BJ (cell line): ENCODE measurements at regions of chr22 and their contacts with region 1.

Region 1: GRCh38 chr22:28899199-28899853 is 16.0 kb downstream of the ZNRF3 start:
- DNase-seq: no peak
- H3K4me3 ChIP-seq: no peak overlapping the region
- H3K27me3 ChIP-seq: no peaks in the 10 kb centered on the region
- CTCF ChIP-seq: no peak

Region 2: DNA sequence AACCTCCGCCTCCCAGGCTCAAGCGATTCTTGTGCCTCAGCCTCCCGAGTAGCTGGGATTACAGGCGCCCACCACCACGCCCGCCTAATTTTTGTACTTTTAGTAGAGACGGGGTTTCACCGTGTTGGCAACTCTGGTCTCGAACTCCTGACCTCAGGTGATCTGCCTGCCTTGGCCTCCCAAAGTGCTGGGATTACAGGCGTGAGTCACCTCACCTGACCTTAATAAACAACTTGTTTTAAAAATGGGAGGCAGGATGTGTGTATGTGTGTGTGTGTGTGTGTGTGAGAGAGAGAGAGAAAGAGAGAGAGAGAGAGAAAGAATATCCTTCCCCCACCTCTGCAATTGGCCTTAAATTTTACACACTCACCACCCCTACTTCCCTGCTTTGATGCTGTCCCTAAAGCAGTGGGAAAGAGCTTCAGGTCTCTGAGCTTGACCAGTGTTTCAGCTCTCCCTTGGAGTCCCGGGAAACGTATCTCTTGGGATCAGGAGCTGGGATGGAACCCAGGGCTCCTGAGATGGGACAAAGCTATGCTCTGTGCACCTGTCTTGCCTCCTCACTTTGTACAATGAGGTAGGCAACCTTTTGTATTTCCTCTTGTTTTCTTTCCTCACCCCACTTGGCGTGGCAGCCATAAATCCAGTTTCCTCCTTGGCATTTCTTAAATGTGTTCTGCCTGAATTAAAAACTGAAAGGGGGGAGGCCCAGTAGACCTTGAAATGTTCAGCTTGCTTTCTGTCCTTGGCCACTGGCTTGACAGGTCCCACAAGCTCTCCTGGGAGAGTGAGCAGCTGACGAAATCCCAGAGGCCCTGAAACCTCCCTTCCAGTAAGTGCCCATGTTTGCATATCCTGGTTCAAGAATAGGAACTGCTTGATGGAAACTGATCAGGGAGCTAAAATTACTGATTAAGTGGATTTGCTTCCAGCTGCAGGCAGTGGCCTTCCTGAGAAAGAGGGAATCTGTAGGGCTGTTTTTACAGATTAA is 81.1 kb before region 1 on chr22:
- CTCF ChIA-PET with region 1: no interaction called
- POLR2A ChIA-PET with region 1: interaction called, 12 read pairs
- DNase-seq: no peak
- H3K4me3 ChIP-seq: no peak overlapping the region
- H3K27me3 ChIP-seq: no peaks in the 10 kb centered on the region
- CTCF ChIP-seq: no peak

Region 3: GRCh38 chr22:29072193-29072978 is 173.1 kb after region 1 on chr22:
- CTCF ChIA-PET with region 1: no interaction called
- POLR2A ChIA-PET with region 1: no interaction called
- DNase-seq: no peak
- H3K4me3 ChIP-seq: peak overlapping the region; percentile 36
- H3K27me3 ChIP-seq: peaks cover 13% of the 10 kb centered on the region
- CTCF ChIP-seq: no peak

Region 4: GRCh38 chr22:30373331-30374325 is 1474.3 kb after region 1 on chr22:
- CTCF ChIA-PET with region 1: no interaction called
- POLR2A ChIA-PET with region 1: interaction called, 13 read pairs
- DNase-seq: no peak
- H3K4me3 ChIP-seq: no peak overlapping the region
- H3K27me3 ChIP-seq: no peaks in the 10 kb centered on the region
- CTCF ChIP-seq: no peak